ENCODE measurements at regions of chr3 and their contacts with region 1.

Region 1: DNA sequence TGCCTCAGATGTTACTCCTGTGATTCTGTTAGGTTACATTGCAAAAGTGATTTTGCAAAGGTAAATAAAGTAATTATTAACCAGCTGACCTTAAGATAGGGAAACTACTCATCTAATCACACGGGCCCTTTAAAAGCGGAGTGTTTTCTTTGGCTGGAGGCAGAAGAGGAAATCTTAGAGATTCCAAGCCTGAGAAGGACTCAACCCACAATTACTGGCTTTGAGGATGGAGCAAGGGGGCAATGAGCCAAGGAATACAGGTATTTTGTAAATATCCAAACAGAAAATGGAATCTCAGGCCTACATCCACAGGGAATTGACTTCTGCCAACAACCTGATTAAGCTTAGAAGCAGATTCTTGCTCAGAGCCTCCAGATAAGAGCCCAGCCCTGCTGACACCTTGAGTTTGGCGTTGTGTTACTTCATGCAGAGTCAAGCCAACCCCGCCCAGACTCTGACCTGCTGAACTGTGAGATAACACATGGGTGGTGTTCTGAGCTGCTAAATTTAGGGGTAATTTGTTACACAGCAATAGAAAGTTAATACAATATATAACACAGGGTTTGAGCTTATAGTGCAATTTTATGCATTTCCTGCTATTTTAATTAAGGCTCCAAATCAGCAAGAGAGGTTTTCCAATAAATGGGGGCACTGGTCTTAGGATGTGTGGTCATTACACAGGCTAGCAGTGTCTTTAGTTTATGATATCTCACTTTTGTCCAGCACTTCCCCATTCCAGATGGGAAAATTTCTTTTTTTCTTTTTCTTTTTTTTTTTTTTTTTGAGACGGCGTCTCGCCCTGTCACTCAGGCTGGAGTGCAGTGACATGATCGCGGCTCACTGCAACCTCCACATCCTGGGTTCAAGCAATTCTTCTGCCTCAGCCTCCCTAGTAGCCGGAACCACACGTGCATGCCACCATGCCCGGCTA is 19.5 kb downstream of the NFKBIZ start:
- DNase-seq: peak; percentile 47
- ATAC-seq: no peak
- H3K4me3 ChIP-seq: no peak overlapping the region
- H3K27ac ChIP-seq: peak overlapping the region; percentile 15
- H3K4me1 ChIP-seq: peaks cover 47% of the 10 kb centered on the region
- H3K27me3 ChIP-seq: no peaks in the 10 kb centered on the region
- CTCF ChIP-seq: no peak

Region 2: DNA sequence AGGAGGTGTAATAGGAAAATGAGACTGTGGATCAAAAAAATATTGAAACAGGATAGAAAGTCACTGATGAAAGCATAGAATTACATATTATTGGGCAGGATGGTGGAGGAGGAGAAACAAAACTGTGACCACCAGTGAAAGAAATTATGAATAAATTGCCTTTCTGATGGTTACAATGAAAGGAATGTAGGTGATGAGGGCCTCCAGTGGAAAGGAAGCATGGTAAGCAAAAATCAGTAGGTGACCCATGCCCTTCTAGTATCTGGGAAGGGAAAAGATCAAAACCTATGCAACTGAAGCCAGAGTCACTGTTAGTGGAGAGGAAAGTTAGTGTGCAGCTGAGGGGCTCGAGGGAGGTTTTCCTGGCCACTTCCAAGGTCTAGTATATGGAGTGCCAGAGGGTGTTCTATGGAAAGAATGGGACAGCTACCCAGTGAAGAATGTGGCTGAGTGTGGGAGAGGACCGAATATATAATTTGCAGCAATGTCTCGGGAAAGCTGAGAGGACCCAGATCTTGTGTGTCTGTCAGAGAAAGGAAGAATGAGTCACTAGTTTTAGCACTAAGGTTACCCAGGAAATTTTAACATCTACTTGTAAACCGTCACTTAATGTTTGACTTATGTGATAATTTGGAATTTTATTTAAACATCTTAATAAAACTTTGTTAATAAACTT is 126.7 kb after region 1 on chr3:
- CTCF ChIA-PET with region 1: no interaction called
- POLR2A ChIA-PET with region 1: interaction called, 16 read pairs
- intact Hi-C with region 1: no loop called
- DNase-seq: peak; percentile 63
- ATAC-seq: peak; percentile 87
- H3K4me3 ChIP-seq: no peak overlapping the region
- H3K27ac ChIP-seq: peak overlapping the region; percentile 61
- H3K4me1 ChIP-seq: peaks cover 27% of the 10 kb centered on the region
- H3K27me3 ChIP-seq: no peaks in the 10 kb centered on the region
- CTCF ChIP-seq: no peak

Region 3: GRCh38 chr3:102006812-102007485 is 138.2 kb after region 1 on chr3:
- CTCF ChIA-PET with region 1: no interaction called
- POLR2A ChIA-PET with region 1: no interaction called
- intact Hi-C with region 1: loop called (anchors 5 kb)
- DNase-seq: peak; percentile 95
- ATAC-seq: peak; percentile 96
- H3K4me3 ChIP-seq: peak overlapping the region; percentile 20; the same call in 1 of the 2 replicates
- H3K27ac ChIP-seq: peak overlapping the region; percentile 92
- H3K4me1 ChIP-seq: peaks cover 26% of the 10 kb centered on the region
- H3K27me3 ChIP-seq: no peaks in the 10 kb centered on the region
- CTCF ChIP-seq: no peak

Region 4: DNA sequence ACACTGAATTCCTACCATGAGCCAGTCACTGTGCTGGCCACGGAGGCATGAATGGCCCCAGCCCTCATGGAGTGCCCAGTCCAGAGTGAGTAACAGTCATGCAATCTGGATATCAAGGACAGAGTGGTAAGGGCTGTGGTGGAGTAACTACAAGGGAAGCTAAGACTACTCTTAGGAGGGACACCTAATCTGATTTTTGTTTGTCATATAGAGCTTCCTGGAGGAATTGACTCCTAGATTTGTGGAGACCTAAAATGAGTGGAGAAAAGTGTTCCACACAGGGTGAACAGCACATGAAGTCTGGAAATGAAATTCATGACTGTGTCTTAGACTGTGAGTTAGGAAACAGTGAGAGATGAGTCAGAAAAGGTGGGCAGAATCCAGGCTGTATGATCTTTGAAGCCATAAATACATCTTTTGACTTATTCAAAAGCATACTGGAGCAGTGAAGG is 200.4 kb after region 1 on chr3:
- CTCF ChIA-PET with region 1: no interaction called
- POLR2A ChIA-PET with region 1: no interaction called
- intact Hi-C with region 1: loop called (anchors 5 kb)
- DNase-seq: peak; percentile 77
- ATAC-seq: peak; percentile 93
- H3K4me3 ChIP-seq: no peak overlapping the region
- H3K27ac ChIP-seq: peak overlapping the region; percentile 77
- H3K4me1 ChIP-seq: peaks cover 23% of the 10 kb centered on the region
- H3K27me3 ChIP-seq: no peaks in the 10 kb centered on the region
- CTCF ChIP-seq: no peak

Region 5: GRCh38 chr3:102106416-102107097 is 237.8 kb after region 1 on chr3:
- CTCF ChIA-PET with region 1: no interaction called
- POLR2A ChIA-PET with region 1: interaction called, 14 read pairs
- intact Hi-C with region 1: no loop called
- DNase-seq: peak; percentile 68
- ATAC-seq: peak; percentile 92
- H3K4me3 ChIP-seq: no peak overlapping the region
- H3K27ac ChIP-seq: peak overlapping the region; percentile 43
- H3K4me1 ChIP-seq: peaks cover 5% of the 10 kb centered on the region; the same call in 1 of the 2 replicates
- H3K27me3 ChIP-seq: no peaks in the 10 kb centered on the region
- CTCF ChIP-seq: no peak